ENCODE measurements at regions of chr15 and their contacts with region 1.

Region 1: GRCh38 chr15:89017370-89018066 is 70.7 kb upstream of the ABHD2 start:
- DNase-seq: peak; percentile 88
- H3K4me3 Mint-ChIP-seq: peak overlapping the region; percentile 57
- H3K27ac Mint-ChIP-seq: peak overlapping the region; percentile 72
- H3K4me1 Mint-ChIP-seq: peaks cover 22% of the 10 kb centered on the region
- H3K27me3 Mint-ChIP-seq: no peaks in the 10 kb centered on the region
- CTCF ChIP-seq: peak; percentile 76

Region 2: DNA sequence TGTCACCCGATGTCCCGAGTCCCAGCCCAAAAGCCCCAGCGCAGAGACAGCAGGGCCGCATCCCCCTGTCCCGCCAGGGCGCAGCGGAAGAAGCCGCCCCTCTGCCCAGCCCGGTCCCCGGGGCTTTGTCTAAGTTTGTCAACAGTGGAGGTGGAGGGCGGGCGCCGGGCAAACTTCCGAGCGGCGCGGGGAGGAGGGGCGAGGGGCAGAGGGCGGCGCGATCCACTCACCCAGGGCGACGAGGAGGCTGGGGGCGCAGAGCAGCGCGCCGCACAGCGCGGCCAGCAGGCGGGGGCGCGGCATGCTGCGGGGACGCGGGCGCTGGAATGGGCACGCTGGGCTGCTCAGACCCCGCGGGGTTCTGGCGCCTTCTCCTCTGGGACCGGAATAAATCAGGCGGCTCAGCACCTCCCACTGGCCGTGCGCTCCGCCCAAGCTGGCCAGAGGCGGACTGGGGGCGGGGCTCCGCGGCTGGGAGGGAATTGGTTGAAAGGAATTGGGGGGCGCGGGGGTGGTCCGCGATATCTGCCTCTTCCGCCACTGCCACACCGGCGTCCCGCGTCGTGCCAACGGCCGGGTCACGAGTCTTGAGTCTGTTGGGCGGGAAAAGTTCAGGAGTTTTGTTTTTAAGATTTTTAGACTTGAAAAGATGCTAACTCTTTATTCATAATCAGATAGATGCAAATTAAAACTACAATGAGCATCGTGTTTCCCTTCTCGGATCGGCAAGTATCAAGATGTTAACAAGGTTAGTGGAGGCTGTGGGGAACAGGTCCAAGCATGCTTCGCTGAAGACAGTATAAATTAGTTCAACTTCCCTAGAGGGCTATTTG is 104.3 kb before region 1 on chr15 and contains the start of gene MFGE8:
- CTCF ChIA-PET with region 1: interaction called, 128 read pairs
- POLR2A ChIA-PET with region 1: interaction called, 10 read pairs
- intact Hi-C with region 1: loop called (anchors 2 kb)
- DNase-seq: peak; percentile 80
- H3K4me3 Mint-ChIP-seq: peak within 1 kb of the TSS; percentile 95
- H3K27ac Mint-ChIP-seq: peak within 1 kb of the TSS; percentile 89
- H3K4me1 Mint-ChIP-seq: peaks cover 33% of the 10 kb centered on the region
- H3K27me3 Mint-ChIP-seq: no peaks in the 10 kb centered on the region
- CTCF ChIP-seq: no peak
- total RNA-seq, gene MFGE8: 207 and 254 TPM in 2 replicates

Region 3: DNA sequence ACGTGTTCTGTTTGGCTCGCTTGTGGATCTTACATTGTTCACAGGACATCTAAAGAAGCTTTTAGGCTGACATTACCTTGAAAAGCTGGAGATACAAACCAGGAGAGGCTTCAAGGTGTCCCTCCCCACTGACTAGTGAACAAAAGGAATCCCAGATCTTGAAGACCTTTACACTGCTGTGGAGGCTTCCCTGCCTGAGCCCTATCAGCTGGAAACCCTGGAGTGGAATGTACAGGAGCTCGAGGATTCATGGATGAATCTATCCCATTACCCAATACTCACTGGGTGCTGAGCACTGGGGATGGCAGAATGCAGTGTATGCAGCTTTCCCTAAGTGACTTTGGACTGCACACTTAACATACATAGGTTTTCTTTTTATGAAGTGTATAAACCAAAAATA is 22.1 kb before region 1 on chr15:
- CTCF ChIA-PET with region 1: interaction called, 10 read pairs
- POLR2A ChIA-PET with region 1: interaction called, 3 read pairs
- intact Hi-C with region 1: no loop called
- DNase-seq: peak; percentile 17
- H3K4me3 Mint-ChIP-seq: no peak overlapping the region
- H3K27ac Mint-ChIP-seq: no peak overlapping the region
- H3K4me1 Mint-ChIP-seq: peaks cover 7% of the 10 kb centered on the region
- H3K27me3 Mint-ChIP-seq: no peaks in the 10 kb centered on the region
- CTCF ChIP-seq: no peak

Measured in MCF 10A (cell line).